ENCODE measurements at regions of chr2 and their contacts with region 1.

Region 1: DNA sequence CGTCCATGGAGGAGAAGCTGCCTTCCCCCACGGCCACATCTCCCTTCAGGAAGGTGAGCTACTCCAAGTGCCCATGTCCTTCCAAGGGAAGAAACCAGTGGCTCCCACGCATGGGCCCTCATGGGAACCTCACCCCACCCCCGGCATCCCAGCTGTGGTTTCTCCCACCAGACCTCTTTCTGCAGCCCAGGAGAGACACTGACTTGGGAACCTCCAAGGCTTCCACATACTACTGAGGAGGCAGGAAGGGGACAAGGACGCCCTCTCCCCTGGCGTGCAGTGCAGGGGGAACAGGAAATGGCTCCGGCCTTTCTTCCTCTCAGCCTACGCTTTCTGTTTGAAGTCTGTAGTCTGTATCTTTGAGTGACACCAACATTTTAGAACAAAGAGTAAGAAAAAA is 104.5 kb upstream of the EPC2 start:
- DNase-seq: peak in 2 of 5 donors; percentile 17 to 25
- H3K4me3 ChIP-seq: peak overlapping the region in 1 of 2 donors; percentile 13
- H3K4me3 Mint-ChIP-seq: peak overlapping the region; percentile 15 to 79 (median 55)
- H3K27ac ChIP-seq: no peak overlapping the region
- H3K27ac Mint-ChIP-seq: peak overlapping the region; percentile 35 to 89 (median 78)
- H3K4me1 ChIP-seq: peaks cover 22% of the 10 kb centered on the region
- H3K4me1 Mint-ChIP-seq: peaks cover 19 to 55% (median 37%) of the 10 kb centered on the region in 4 donors
- H3K27me3 ChIP-seq: no peaks in the 10 kb centered on the region
- H3K27me3 Mint-ChIP-seq: no peaks in the 10 kb centered on the region

Region 2: DNA sequence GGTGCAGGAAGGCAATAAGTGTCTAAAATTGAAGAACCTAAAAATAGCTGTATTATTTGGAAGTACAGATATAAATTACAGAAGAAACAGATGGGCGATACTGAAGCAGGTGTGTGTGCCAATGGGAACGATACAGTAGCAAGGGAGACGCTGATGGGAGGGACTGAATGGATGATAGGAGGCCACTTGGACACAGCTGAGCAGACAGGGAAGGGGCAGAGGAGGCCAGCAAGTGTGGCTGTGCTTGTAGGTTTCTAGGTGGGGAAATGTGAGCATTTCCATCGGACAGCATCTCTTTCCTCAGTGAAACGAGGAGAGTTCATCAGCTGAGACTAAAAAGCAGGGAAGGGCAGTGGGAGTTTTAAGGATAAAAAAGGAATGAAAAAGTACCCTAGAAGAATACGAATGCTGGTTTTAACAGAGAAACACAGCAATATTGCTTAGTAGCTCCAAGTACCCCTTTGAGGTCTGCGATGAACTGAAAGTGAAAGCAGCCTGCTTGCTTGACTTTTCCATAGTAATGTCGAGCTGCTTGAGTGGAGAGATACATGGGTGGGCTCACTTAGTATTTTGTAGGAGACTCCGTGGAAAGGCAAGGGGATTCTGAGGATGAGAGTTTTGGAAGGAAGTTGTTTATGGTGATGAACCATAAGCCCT is 12.8 kb after region 1 on chr2:
- CTCF ChIA-PET with region 1: interaction called, 7 read pairs
- POLR2A ChIA-PET with region 1: interaction called, 39 read pairs
- intact Hi-C with region 1: no loop called
- DNase-seq: peak; percentile 43 to 58 (median 54)
- H3K4me3 ChIP-seq: peak overlapping the region; percentile 62 to 67
- H3K4me3 Mint-ChIP-seq: no peak overlapping the region
- H3K27ac ChIP-seq: peak overlapping the region; percentile 61
- H3K27ac Mint-ChIP-seq: no peak overlapping the region
- H3K4me1 ChIP-seq: peaks cover 17% of the 10 kb centered on the region
- H3K4me1 Mint-ChIP-seq: peaks cover 0 to 5% (median 3%) of the 10 kb centered on the region in 4 donors
- H3K27me3 ChIP-seq: no peaks in the 10 kb centered on the region
- H3K27me3 Mint-ChIP-seq: no peaks in the 10 kb centered on the region

Region 3: GRCh38 chr2:148590612-148591011 is 50.6 kb after region 1 on chr2:
- CTCF ChIA-PET with region 1: no interaction called
- POLR2A ChIA-PET with region 1: no interaction called
- intact Hi-C with region 1: no loop called
- DNase-seq: no peak
- H3K4me3 ChIP-seq: no peak overlapping the region
- H3K4me3 Mint-ChIP-seq: no peak overlapping the region
- H3K27ac ChIP-seq: no peak overlapping the region
- H3K27ac Mint-ChIP-seq: no peak overlapping the region
- H3K4me1 ChIP-seq: no peaks in the 10 kb centered on the region
- H3K4me1 Mint-ChIP-seq: no peaks in the 10 kb centered on the region
- H3K27me3 ChIP-seq: no peaks in the 10 kb centered on the region
- H3K27me3 Mint-ChIP-seq: no peaks in the 10 kb centered on the region

Measured in CD4-positive, alpha-beta memory T cell (primary cell).